ENCODE measurements at regions of chr6 and their contacts with region 1.

Region 1: GRCh38 chr6:41735427-41736356 is at the start of gene TFEB:
- DNase-seq: peak; percentile 95 to 97 (median 96)
- H3K4me3 ChIP-seq: peak within 1 kb of the TSS; percentile 51 to 98 (median 85)
- H3K27ac ChIP-seq: peak within 1 kb of the TSS; percentile 90 to 100 (median 99)
- H3K27me3 ChIP-seq: no peaks in the 10 kb centered on the region
- CTCF ChIP-seq: peak; percentile 73 to 99 (median 88)
- total RNA-seq, gene TFEB: 13.9 to 125 (median 40.5) TPM

Region 2: GRCh38 chr6:41545703-41546474 is 189.8 kb before region 1 on chr6 and contains the start of gene FOXP4:
- intact Hi-C with region 1: loop called in 1 of 2 experiments (anchors 5 kb)
- DNase-seq: peak; percentile 75 to 93 (median 89)
- H3K4me3 ChIP-seq: peak within 1 kb of the TSS; percentile 52 to 87 (median 74)
- H3K27ac ChIP-seq: peak within 1 kb of the TSS in 18 of 59 donors; percentile 13 to 78 (median 50)
- H3K27me3 ChIP-seq: peaks cover 0 to 24% (median 0%) of the 10 kb centered on the region in 45 donors
- CTCF ChIP-seq: peak in 11 of 56 donors; percentile 13 to 33 (median 22)
- total RNA-seq, gene FOXP4: 19.2 to 35.8 (median 25.0) TPM

Region 3: GRCh38 chr6:41689171-41690008 is 46.3 kb before region 1 on chr6:
- intact Hi-C with region 1: loop called (anchors 2 to 5 kb)
- DNase-seq: peak in 6 of 10 donors; percentile 25 to 60 (median 29)
- H3K4me3 ChIP-seq: no peak overlapping the region
- H3K27ac ChIP-seq: peak overlapping the region in 58 of 59 donors; percentile 69 to 100 (median 99)
- H3K27me3 ChIP-seq: no peaks in the 10 kb centered on the region
- CTCF ChIP-seq: no peak

Region 4: DNA sequence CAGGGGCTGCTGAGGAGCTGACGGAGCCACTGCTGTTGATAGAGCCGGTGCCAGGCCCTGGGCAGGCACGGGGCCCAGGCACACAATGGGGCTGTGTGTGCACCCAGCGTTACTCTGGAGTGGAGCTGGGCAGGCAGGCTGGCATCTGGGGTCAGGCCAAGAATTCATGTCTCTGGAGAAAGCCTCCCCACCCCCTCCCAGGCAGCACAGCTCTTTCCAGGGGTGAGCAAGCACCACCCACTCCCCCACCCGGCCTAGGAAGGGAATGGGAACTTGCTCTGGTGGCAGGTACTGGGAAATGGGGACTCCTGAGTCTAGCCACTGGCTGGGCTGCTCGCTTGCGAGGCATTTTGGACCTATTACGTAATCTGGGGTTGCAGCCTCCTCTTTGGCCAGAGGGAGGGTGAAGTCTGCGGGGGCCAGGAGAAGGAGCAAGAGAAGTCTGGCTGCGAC is 23.0 kb before region 1 on chr6:
- intact Hi-C with region 1: loop called in 1 of 2 experiments (anchors 1 kb)
- DNase-seq: peak; percentile 67 to 97 (median 94)
- H3K4me3 ChIP-seq: peak overlapping the region in 20 of 59 donors; percentile 4 to 40 (median 17)
- H3K27ac ChIP-seq: peak overlapping the region; percentile 85 to 100 (median 99)
- H3K27me3 ChIP-seq: no peaks in the 10 kb centered on the region
- CTCF ChIP-seq: peak in 13 of 56 donors; percentile 6 to 45 (median 17)

Region 5: GRCh38 chr6:41920921-41921711 is 185.4 kb after region 1 on chr6 and contains the starts of genes BYSL and MED20:
- intact Hi-C with region 1: loop called in 1 of 2 experiments (anchors 5 kb)
- DNase-seq: peak; percentile 92 to 97 (median 96)
- H3K4me3 ChIP-seq: peak within 1 kb of the TSS; percentile 68 to 100 (median 91)
- H3K27ac ChIP-seq: peak within 1 kb of the TSS; percentile 91 to 100 (median 98)
- H3K27me3 ChIP-seq: no peaks in the 10 kb centered on the region
- CTCF ChIP-seq: peak; percentile 93 to 100 (median 99)
- total RNA-seq, gene BYSL: 6.6 to 16.7 (median 10.7) TPM
- total RNA-seq, gene MED20: 7.2 to 21.0 (median 14.8) TPM